Esophagus squamous epithelium (tissue), 5 donors: ENCODE measurements at regions of chr2 and their contacts with region 1.

Region 1: DNA sequence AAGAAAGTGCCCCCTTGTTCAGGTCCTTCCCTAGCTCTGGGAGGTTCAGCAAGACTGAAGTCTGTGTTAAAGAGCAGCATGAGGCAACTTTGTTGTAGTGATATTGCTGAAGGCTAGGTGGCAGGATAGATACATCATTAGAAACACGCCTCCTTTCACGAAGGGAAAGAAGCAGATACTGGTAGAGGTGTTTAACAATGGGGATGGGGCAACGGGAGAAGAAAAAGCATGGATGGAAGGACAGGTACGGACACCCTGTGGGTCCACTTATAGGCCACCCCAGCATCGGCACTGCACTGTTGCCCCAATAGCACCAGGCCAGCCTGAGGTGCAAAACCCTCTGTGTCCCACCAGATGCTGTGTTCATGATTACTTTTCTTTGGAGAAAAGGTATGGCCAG is 3.5 kb upstream of the IGFBP5 start:
- DNase-seq: no peak
- H3K4me3 ChIP-seq: no peak overlapping the region
- H3K27ac ChIP-seq: peak overlapping the region in 2 of 4 donors; percentile 54 to 70
- H3K4me1 ChIP-seq: peaks cover 27 to 69% (median 33%) of the 10 kb centered on the region in 3 donors
- H3K27me3 ChIP-seq: peaks cover 0 to 42% (median 0%) of the 10 kb centered on the region in 4 donors
- CTCF ChIP-seq: peak; percentile 15 to 75 (median 67)
- POLR2A ChIP-seq: no peak

Region 2: GRCh38 chr2:216606551-216607276 is 92.2 kb before region 1 on chr2:
- intact Hi-C with region 1: no loop called
- DNase-seq: no peak
- H3K4me3 ChIP-seq: no peak overlapping the region
- H3K27ac ChIP-seq: no peak overlapping the region
- H3K4me1 ChIP-seq: no peaks in the 10 kb centered on the region
- H3K27me3 ChIP-seq: peaks cover 0 to 8% (median 0%) of the 10 kb centered on the region in 4 donors
- CTCF ChIP-seq: no peak
- POLR2A ChIP-seq: no peak

Region 3: DNA sequence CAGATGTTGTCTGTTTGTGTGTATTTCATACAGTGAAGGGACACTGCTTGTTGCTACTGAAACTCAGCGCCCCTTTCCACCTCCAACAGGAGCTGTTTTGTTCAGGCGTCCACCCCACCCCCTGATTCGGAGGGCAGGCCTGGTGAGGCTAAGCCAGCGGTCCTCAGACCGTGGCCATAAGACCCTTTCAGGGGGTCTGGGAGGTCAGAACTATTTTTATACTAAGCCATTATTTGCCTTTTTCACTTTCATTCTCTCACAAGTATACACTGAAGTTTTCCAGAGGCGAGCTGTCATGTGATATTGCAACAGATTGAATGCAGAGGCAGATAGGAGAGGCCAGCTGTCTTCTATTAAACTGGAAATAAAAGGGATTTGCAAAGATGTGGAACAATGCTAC is 36.2 kb after region 1 on chr2:
- intact Hi-C with region 1: no loop called
- DNase-seq: no peak
- H3K4me3 ChIP-seq: no peak overlapping the region
- H3K27ac ChIP-seq: peak overlapping the region in 3 of 4 donors; percentile 11 to 75 (median 40)
- H3K4me1 ChIP-seq: peaks cover 0 to 27% (median 10%) of the 10 kb centered on the region in 3 donors
- H3K27me3 ChIP-seq: no peaks in the 10 kb centered on the region
- CTCF ChIP-seq: no peak
- POLR2A ChIP-seq: no peak

Region 4: DNA sequence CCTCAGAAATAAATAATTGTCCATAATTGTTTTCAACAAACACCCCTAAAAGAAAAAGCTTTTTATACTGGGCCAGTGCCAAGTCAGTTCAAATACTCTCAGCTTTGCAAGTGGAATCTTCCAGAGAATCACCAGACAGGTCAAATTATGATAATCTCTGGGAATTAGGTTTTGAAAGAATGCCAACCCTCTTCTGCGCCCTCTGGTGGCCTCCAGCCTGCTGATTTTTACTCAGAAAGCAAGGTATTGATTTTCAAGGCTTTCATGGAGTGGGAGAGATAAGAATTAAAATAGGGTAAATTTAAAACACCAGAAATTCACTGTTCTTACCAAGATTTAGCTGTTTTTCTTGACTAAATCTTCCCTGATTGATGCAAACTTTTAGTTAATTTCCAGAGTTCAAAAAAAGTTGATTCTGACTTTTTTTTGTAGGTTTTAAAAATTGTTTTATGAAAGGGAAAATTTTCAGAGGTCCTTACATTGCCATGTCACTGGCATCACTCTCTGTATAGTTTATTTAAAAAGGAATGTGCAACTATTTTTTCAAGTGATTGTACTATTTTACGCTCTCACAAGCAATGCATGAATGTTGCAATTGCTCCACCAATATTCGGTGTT is 443.9 kb after region 1 on chr2:
- intact Hi-C with region 1: loop called (anchors 10 kb)
- DNase-seq: no peak
- H3K4me3 ChIP-seq: no peak overlapping the region
- H3K27ac ChIP-seq: no peak overlapping the region
- H3K4me1 ChIP-seq: no peaks in the 10 kb centered on the region
- H3K27me3 ChIP-seq: no peaks in the 10 kb centered on the region
- CTCF ChIP-seq: peak in 4 of 6 experiments; percentile 38 to 72 (median 48)
- POLR2A ChIP-seq: no peak

Region 5: DNA sequence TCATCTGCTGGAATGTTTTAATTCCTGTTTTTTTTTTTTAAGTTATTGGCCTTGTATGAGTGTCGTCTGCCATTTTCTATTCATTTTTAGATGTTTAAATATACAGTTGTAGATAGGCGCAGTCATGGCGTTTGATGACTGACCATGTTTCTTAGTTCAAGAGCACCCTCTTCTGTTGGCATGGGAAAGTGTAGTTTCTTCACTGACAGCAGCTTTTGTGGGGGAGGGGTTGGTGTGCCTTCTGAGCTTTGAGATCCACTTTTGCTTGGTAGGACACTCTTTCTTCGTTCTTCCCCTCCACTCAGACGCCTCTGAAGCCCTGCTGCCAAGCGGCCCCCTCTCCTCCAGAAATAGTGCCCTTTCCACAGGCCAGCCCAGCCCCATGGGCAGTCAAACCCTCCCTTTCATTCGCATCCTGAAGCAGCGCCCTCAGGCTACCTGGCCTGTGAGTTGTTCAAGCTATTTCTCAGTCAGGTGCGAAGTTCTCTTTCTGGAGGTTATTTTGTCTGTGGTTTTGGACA is 811.9 kb after region 1 on chr2:
- intact Hi-C with region 1: loop called (anchors 5 kb)
- DNase-seq: no peak
- H3K4me3 ChIP-seq: no peak overlapping the region
- H3K27ac ChIP-seq: no peak overlapping the region
- H3K4me1 ChIP-seq: peaks cover 0 to 10% (median 6%) of the 10 kb centered on the region in 3 donors
- H3K27me3 ChIP-seq: no peaks in the 10 kb centered on the region
- CTCF ChIP-seq: peak; percentile 22 to 82 (median 64)
- POLR2A ChIP-seq: no peak